ENCODE measurements at regions of chr14 and their contacts with region 1.

Region 1: GRCh38 chr14:61296719-61297502 is 15.8 kb upstream of the TMEM30B start:
- DNase-seq: peak in 1 of 7 donors; percentile 11
- H3K4me3 ChIP-seq: no peak overlapping the region
- H3K27ac ChIP-seq: peak overlapping the region in 1 of 5 donors; percentile 52
- H3K4me1 ChIP-seq: peaks cover 7 to 14% of the 10 kb centered on the region in 2 donors
- H3K27me3 ChIP-seq: no peaks in the 10 kb centered on the region
- CTCF ChIP-seq: peak; percentile 40 to 66 (median 52)
- POLR2A ChIP-seq: no peak

Region 2: GRCh38 chr14:60553808-60554207 is 743.1 kb before region 1 on chr14:
- intact Hi-C with region 1: no loop called
- DNase-seq: no peak
- H3K4me3 ChIP-seq: no peak overlapping the region
- H3K27ac ChIP-seq: no peak overlapping the region
- H3K4me1 ChIP-seq: no peaks in the 10 kb centered on the region
- H3K27me3 ChIP-seq: no peaks in the 10 kb centered on the region
- CTCF ChIP-seq: no peak
- POLR2A ChIP-seq: no peak

Region 3: GRCh38 chr14:61355892-61356325 is 59.0 kb after region 1 on chr14:
- intact Hi-C with region 1: no loop called
- DNase-seq: peak; percentile 43 to 78 (median 65)
- H3K4me3 ChIP-seq: no peak overlapping the region
- H3K27ac ChIP-seq: peak overlapping the region in 2 of 5 donors; percentile 7 to 55
- H3K4me1 ChIP-seq: no peaks in the 10 kb centered on the region
- H3K27me3 ChIP-seq: no peaks in the 10 kb centered on the region
- CTCF ChIP-seq: no peak
- POLR2A ChIP-seq: no peak

Region 4: DNA sequence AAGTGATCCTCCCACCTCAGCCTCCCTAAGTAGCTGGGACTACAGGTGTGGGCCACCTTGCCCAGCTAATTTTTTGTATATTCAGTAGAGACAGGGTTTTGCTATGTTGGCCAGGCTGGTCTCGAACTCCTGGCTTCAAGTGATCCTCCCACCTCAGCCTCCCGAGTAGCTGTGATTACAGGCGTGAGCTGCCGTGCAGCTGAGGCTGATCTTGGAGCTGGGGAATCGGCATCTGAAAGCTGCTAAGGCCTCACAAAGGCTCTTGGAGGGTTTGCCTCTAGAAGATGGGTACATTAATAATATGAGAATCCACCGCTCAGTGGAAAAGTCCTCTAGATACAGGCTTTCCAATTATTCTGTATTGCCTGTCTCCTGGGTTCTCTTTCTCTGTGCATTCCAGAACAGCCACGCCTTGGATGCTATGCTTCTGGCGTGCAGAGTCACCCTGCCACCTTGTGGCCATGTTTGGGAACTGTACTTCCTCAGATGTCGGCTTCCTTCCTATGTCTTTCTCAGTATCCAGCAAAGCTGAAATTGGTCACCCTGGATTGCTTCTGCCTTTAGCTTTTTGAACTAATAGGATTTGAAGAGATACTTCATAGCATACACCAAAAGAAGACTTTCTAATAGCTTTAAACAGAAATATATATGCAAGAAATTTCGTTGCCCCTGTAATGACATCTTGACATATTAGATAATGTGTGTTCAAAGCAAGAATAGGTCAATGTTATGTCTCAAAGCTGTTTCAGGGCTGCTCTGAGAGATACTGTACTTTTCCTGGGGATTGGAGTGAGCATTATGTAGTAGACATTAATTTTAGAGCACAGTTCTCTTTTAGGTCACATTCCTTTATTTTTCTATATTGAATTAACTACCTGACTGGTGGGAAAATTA is 540.7 kb after region 1 on chr14:
- intact Hi-C with region 1: loop called in 1 of 2 experiments (anchors 10 kb)
- DNase-seq: peak; percentile 66 to 93 (median 83)
- H3K4me3 ChIP-seq: no peak overlapping the region
- H3K27ac ChIP-seq: no peak overlapping the region
- H3K4me1 ChIP-seq: no peaks in the 10 kb centered on the region
- H3K27me3 ChIP-seq: no peaks in the 10 kb centered on the region
- CTCF ChIP-seq: peak; percentile 93 to 99 (median 96)
- POLR2A ChIP-seq: no peak

Measured in adrenal gland (tissue), 19 donors.